ENCODE measurements at regions of chr6 and their contacts with region 1.

Region 1: DNA sequence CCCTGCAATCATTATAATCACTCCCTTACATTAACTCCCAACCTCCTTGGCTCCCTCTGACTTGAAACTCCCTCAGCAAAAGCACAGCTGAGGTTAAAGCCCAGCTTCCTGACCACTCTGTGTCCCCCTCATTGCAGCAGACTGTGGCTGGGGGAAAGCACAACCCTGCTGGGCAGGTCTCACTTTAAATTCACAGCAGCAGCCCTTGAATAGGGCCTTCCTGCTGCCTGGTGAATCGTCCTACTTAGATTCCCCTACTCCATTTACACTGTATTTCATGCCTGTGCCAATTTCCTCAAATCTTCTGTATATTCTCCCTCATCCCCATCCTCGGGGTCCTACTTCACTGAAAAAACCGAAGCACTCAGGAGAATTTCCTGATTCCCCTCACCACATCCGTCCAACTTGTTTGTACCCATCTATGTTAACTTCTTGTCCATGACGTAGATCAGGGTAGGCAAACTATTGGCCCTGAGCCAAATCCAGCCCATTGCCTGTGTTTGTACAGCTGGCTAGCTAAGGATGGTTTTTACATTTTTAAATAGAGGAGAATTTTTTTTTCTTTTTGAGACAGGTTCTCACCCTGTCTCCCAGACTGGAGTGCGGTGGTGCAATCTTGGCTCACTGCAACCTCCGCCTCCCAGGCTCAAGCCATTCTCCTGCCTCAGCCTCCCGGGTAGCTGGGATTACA is 31.5 kb upstream of the GCM1 start:
- DNase-seq: peak; percentile 33
- ATAC-seq: no peak
- H3K4me3 ChIP-seq: no peak overlapping the region
- H3K27ac ChIP-seq: no peak overlapping the region
- H3K4me1 ChIP-seq: no peaks in the 10 kb centered on the region
- H3K27me3 ChIP-seq: 0 out of 2 replicates have a peak, but pooled peaks cover 2% of the 10 kb centered on the region
- CTCF ChIP-seq: no peak
- POLR2A ChIP-seq: no peak
- RAD21 ChIP-seq: no peak

Region 2: GRCh38 chr6:53926525-53926924 is 746.4 kb after region 1 on chr6:
- CTCF ChIA-PET with region 1: no interaction called
- POLR2A ChIA-PET with region 1: no interaction called
- dilution Hi-C with region 1: no loop called
- in situ Hi-C with region 1: loop called (anchors 25 kb)
- intact Hi-C with region 1: no loop called
- DNase-seq: peak; percentile 40
- ATAC-seq: no peak
- H3K4me3 ChIP-seq: no peak overlapping the region
- H3K27ac ChIP-seq: no peak overlapping the region
- H3K4me1 ChIP-seq: peaks cover 8% of the 10 kb centered on the region
- H3K27me3 ChIP-seq: no peaks in the 10 kb centered on the region
- CTCF ChIP-seq: no peak
- POLR2A ChIP-seq: no peak
- RAD21 ChIP-seq: no peak

Measured in IMR-90 (cell line).